CD14-positive monocyte (primary cell): ENCODE measurements at regions of chr15 and their contacts with region 1.

Region 1: DNA sequence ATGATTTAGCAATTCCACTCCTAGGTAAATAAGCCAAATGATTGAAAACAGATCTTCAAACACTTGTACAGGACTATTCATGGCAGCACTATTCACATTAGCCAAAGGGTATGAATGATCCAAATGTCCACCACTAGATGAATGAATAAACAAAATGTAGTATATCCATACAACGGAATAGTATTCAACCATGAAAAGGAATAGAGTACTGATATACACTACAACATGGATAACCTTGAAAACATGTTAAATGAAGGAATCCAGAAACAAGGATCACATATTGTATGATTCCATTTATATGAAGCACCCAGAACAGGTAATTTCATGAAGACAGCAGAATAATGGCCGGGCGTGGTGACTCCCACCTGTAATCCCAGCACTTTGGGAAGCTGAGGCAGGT is 78.2 kb upstream of the IGF1R start:
- DNase-seq: no peak
- H3K4me3 ChIP-seq: no peak overlapping the region
- H3K4me3 Mint-ChIP-seq: no peak overlapping the region
- H3K27ac ChIP-seq: no peak overlapping the region
- H3K27ac Mint-ChIP-seq: no peak overlapping the region
- H3K4me1 ChIP-seq: no peaks in the 10 kb centered on the region
- H3K4me1 Mint-ChIP-seq: no peaks in the 10 kb centered on the region
- H3K27me3 ChIP-seq: peaks cover 0 to 2% of the 10 kb centered on the region in 2 donors
- H3K27me3 Mint-ChIP-seq: peaks cover 14 to 16% (median 14%) of the 10 kb centered on the region in 3 donors
- CTCF ChIP-seq: no peak

Region 2: GRCh38 chr15:98455965-98456364 is 114.2 kb before region 1 on chr15:
- intact Hi-C with region 1: loop called in 1 of 2 experiments (anchors 10 kb)
- DNase-seq: no peak
- H3K4me3 ChIP-seq: no peak overlapping the region
- H3K4me3 Mint-ChIP-seq: no peak overlapping the region
- H3K27ac ChIP-seq: no peak overlapping the region
- H3K27ac Mint-ChIP-seq: no peak overlapping the region
- H3K4me1 ChIP-seq: no peaks in the 10 kb centered on the region
- H3K4me1 Mint-ChIP-seq: no peaks in the 10 kb centered on the region
- H3K27me3 ChIP-seq: no peaks in the 10 kb centered on the region
- H3K27me3 Mint-ChIP-seq: peaks cover 2 to 9% (median 4%) of the 10 kb centered on the region in 3 donors
- CTCF ChIP-seq: no peak

Region 3: GRCh38 chr15:98493917-98494511 is 76.1 kb before region 1 on chr15:
- intact Hi-C with region 1: no loop called
- DNase-seq: no peak
- H3K4me3 ChIP-seq: no peak overlapping the region
- H3K4me3 Mint-ChIP-seq: no peak overlapping the region
- H3K27ac ChIP-seq: no peak overlapping the region
- H3K27ac Mint-ChIP-seq: no peak overlapping the region
- H3K4me1 ChIP-seq: no peaks in the 10 kb centered on the region
- H3K4me1 Mint-ChIP-seq: no peaks in the 10 kb centered on the region
- H3K27me3 ChIP-seq: no peaks in the 10 kb centered on the region
- H3K27me3 Mint-ChIP-seq: peaks cover 1 to 2% (median 1%) of the 10 kb centered on the region in 3 donors
- CTCF ChIP-seq: no peak

Region 4: GRCh38 chr15:98620020-98620419 is 49.9 kb after region 1 on chr15:
- intact Hi-C with region 1: loop called in 1 of 2 experiments (anchors 10 kb)
- DNase-seq: no peak
- H3K4me3 ChIP-seq: no peak overlapping the region
- H3K4me3 Mint-ChIP-seq: peak overlapping the region in 1 of 2 donors; percentile 44
- H3K27ac ChIP-seq: no peak overlapping the region
- H3K27ac Mint-ChIP-seq: no peak overlapping the region
- H3K4me1 ChIP-seq: no peaks in the 10 kb centered on the region
- H3K4me1 Mint-ChIP-seq: no peaks in the 10 kb centered on the region
- H3K27me3 ChIP-seq: peaks cover 29 to 39% of the 10 kb centered on the region in 2 donors
- H3K27me3 Mint-ChIP-seq: peaks cover 34 to 41% (median 38%) of the 10 kb centered on the region in 3 donors
- CTCF ChIP-seq: no peak

Region 5: GRCh38 chr15:99662903-99663302 is 1092.8 kb after region 1 on chr15:
- intact Hi-C with region 1: no loop called
- DNase-seq: no peak
- H3K4me3 ChIP-seq: no peak overlapping the region
- H3K4me3 Mint-ChIP-seq: no peak overlapping the region
- H3K27ac ChIP-seq: peak overlapping the region in 1 of 2 donors; percentile 32
- H3K27ac Mint-ChIP-seq: no peak overlapping the region
- H3K4me1 ChIP-seq: peaks cover 3 to 8% of the 10 kb centered on the region in 2 donors
- H3K4me1 Mint-ChIP-seq: peaks cover 16% of the 10 kb centered on the region
- H3K27me3 ChIP-seq: no peaks in the 10 kb centered on the region
- H3K27me3 Mint-ChIP-seq: no peaks in the 10 kb centered on the region
- CTCF ChIP-seq: no peak